Ovary (tissue), 10 donors: ENCODE measurements at regions of chr10 and their contacts with region 1.

Region 1: GRCh38 chr10:72215652-72216549 is at the starts of genes ANAPC16 and ASCC1:
- DNase-seq: peak; percentile 92 to 96 (median 94)
- H3K4me3 ChIP-seq: peak within 1 kb of the TSS; percentile 77
- H3K27ac ChIP-seq: peak within 1 kb of the TSS; percentile 92 to 99
- H3K4me1 ChIP-seq: peaks cover 9% of the 10 kb centered on the region
- H3K27me3 ChIP-seq: no peaks in the 10 kb centered on the region
- CTCF ChIP-seq: peak in 2 of 3 donors; percentile 7 to 47
- EP300 ChIP-seq: peak; percentile 41
- POLR2A ChIP-seq: peak; percentile 99
- total RNA-seq, gene ANAPC16: 71.6 to 136 (median 112) TPM
- total RNA-seq, gene ASCC1: 21.6 to 53.5 (median 31.1) TPM

Region 2: GRCh38 chr10:71963756-71964668 is 251.9 kb before region 1 on chr10 and contains the start of gene CHST3:
- intact Hi-C with region 1: loop called in 2 of 4 experiments (anchors 10 kb)
- DNase-seq: peak; percentile 81 to 91 (median 86)
- H3K4me3 ChIP-seq: peak within 1 kb of the TSS; percentile 84
- H3K27ac ChIP-seq: peak within 1 kb of the TSS; percentile 96 to 98
- H3K4me1 ChIP-seq: peaks cover 24% of the 10 kb centered on the region
- H3K27me3 ChIP-seq: no peaks in the 10 kb centered on the region
- CTCF ChIP-seq: no peak
- EP300 ChIP-seq: no peak
- POLR2A ChIP-seq: peak; percentile 62
- total RNA-seq, gene CHST3: 26.0 to 69.2 (median 36.1) TPM

Region 3: DNA sequence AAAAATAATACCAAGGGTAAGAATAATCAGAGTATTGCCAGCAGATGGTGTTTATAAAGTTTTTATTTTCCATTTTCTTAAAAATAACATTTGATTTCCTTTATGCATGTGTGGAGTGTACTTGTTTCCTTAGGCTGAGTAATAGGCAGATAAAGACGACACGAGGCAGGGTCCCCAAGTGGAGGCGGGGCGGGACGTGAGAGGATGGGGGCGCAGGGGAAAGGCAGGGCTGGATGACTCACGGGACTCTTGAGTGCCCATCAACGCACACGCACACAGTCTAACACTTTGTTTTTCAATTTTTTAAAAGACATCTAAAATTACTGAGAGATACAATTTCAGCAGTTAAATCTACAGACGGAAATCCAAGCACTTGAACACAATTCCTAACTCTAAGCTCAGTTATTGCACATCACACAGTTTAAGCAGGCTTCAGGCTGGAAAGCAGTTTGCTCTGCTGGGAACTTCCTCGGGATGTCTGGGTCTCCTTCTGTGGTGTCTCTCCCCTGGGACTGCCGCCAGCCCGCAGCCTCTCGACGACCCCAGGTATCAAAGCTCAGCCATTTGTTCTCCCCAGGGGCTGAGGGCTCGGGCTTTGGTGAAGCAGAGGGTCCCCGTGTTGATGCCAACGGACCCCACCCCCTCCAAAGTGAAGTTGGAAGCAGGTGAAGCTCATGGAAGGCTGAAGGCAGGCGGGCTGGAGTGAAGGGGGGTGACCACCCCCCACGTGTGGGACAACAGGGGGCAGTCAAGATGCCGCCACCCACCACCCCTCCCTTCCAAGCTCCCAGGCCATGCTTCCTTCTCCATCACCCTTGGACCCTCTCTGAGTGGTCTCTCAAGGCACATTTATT is 156.7 kb before region 1 on chr10:
- intact Hi-C with region 1: loop called in 1 of 4 experiments (anchors 10 kb)
- DNase-seq: no peak
- H3K4me3 ChIP-seq: no peak overlapping the region
- H3K27ac ChIP-seq: peak overlapping the region in 1 of 2 donors; percentile 25
- H3K4me1 ChIP-seq: peaks cover 8% of the 10 kb centered on the region
- H3K27me3 ChIP-seq: no peaks in the 10 kb centered on the region
- CTCF ChIP-seq: no peak
- EP300 ChIP-seq: no peak
- POLR2A ChIP-seq: no peak

Region 4: DNA sequence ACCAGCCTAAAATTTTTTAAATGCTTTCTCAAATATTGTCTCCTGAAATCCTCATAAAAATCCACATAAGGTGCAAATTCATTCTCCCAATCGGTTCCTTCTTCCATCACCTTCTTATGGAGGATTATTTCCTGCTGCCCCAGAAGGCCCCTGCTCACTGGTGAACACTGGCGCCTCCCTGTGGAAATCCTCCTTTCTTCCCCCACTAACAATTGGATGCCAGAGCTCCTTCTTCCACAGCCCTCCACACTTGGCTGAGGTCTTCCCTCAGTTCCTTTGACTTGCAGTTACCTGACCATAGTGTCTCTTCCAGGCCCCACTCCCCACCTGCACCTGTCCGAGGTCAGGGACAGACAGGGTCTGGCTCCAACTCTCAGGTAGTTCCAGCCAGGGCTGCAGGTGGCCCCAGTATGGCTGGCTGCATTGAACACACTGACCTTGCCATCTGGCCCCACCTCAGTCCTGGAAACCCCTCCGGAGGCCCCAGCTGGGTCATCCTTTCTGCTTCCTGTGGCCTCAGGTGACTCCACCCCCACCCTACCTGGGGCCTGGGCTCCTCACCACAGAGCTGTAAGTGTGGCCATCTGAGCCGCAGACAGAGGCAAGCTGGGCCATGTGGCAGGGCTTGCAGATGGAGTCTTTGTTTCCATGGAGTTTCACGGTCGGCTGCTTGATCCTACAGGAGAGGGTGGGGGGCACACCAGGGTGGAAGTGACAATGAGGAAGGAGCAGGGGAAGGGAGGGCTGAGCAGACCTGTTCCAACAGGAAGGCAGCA is 146.0 kb before region 1 on chr10:
- intact Hi-C with region 1: loop called in 1 of 4 experiments (anchors 5 kb)
- DNase-seq: no peak
- H3K4me3 ChIP-seq: no peak overlapping the region
- H3K27ac ChIP-seq: no peak overlapping the region
- H3K4me1 ChIP-seq: peaks cover 23% of the 10 kb centered on the region
- H3K27me3 ChIP-seq: no peaks in the 10 kb centered on the region
- CTCF ChIP-seq: no peak
- EP300 ChIP-seq: no peak
- POLR2A ChIP-seq: no peak

Region 5: DNA sequence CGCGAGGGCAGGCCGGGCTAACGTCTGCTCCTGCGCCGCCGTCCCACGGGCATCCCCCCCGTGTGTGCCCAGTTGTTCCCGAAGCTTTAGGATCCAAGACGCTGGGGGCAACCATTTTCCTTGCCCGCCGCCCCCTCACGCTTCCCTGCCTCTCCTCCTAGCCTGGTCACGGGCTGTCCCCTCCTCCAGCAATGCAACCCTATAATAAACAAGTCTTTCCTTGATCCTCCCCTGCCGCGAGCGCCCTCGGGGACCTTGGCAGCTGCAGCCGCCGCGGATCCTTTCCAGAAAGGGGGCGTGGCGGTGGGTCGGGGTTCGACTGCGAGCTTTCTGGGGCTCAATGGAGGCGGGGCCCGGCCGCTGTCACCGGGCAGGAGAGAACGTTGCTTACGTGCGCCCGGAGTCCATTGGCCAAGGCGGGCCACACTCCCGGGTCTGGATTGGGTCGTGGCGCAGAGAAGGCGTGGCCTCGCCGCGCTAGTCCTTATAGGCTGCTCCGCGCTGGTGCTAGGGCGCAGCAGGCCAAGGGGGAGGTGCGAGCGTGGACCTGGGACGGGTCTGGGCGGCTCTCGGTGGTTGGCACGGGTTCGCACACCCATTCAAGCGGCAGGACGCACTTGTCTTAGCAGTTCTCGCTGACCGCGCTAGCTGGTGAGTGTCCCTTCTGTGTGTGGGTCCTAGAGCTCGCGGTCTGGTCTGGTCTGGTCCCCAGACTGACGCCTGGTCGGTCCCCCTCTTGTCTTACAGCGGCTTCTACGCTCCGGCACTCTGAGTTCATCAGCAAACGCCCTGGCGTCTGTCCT is 57.7 kb after region 1 on chr10 and contains the start of gene DDIT4:
- intact Hi-C with region 1: loop called in 2 of 4 experiments (anchors 1 to 2 kb)
- DNase-seq: peak; percentile 100
- H3K4me3 ChIP-seq: peak within 1 kb of the TSS; percentile 77
- H3K27ac ChIP-seq: peak within 1 kb of the TSS; percentile 89 to 95
- H3K4me1 ChIP-seq: peaks cover 6% of the 10 kb centered on the region
- H3K27me3 ChIP-seq: no peaks in the 10 kb centered on the region
- CTCF ChIP-seq: peak in 1 of 3 donors; percentile 29
- EP300 ChIP-seq: peak; percentile 79
- POLR2A ChIP-seq: peak; percentile 100
- total RNA-seq, gene DDIT4: 229 to 1,952 (median 524) TPM

Region 6: DNA sequence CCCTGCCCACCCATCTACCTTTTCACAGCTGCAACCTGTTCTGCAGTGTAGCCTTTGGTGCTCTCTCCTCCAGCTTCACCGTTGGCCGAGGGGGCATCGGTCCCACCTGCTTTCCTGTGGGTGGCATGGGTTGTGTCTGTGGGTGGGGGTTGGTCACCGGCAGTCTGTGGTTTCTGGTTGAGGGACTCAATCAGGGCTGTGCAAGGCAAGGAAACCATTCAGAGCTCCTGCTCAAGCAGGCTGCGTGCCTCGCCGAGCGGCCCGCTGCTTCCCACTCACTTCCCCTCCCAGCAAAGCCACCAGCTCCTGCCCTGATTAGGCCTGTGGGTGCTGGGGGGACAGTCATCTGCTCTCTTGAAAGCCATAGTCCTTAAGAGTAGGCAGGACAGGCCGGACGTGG is 129.0 kb after region 1 on chr10:
- intact Hi-C with region 1: no loop called
- DNase-seq: no peak
- H3K4me3 ChIP-seq: no peak overlapping the region
- H3K27ac ChIP-seq: no peak overlapping the region
- H3K4me1 ChIP-seq: no peaks in the 10 kb centered on the region
- H3K27me3 ChIP-seq: no peaks in the 10 kb centered on the region
- CTCF ChIP-seq: no peak
- EP300 ChIP-seq: no peak
- POLR2A ChIP-seq: no peak

Region 7: GRCh38 chr10:72846225-72846624 is 630.3 kb after region 1 on chr10:
- intact Hi-C with region 1: no loop called
- DNase-seq: no peak
- H3K4me3 ChIP-seq: no peak overlapping the region
- H3K27ac ChIP-seq: no peak overlapping the region
- H3K4me1 ChIP-seq: no peaks in the 10 kb centered on the region
- H3K27me3 ChIP-seq: no peaks in the 10 kb centered on the region
- CTCF ChIP-seq: no peak
- EP300 ChIP-seq: no peak
- POLR2A ChIP-seq: no peak